ENCODE measurements at regions of chr16 and their contacts with region 1.

Region 1: DNA sequence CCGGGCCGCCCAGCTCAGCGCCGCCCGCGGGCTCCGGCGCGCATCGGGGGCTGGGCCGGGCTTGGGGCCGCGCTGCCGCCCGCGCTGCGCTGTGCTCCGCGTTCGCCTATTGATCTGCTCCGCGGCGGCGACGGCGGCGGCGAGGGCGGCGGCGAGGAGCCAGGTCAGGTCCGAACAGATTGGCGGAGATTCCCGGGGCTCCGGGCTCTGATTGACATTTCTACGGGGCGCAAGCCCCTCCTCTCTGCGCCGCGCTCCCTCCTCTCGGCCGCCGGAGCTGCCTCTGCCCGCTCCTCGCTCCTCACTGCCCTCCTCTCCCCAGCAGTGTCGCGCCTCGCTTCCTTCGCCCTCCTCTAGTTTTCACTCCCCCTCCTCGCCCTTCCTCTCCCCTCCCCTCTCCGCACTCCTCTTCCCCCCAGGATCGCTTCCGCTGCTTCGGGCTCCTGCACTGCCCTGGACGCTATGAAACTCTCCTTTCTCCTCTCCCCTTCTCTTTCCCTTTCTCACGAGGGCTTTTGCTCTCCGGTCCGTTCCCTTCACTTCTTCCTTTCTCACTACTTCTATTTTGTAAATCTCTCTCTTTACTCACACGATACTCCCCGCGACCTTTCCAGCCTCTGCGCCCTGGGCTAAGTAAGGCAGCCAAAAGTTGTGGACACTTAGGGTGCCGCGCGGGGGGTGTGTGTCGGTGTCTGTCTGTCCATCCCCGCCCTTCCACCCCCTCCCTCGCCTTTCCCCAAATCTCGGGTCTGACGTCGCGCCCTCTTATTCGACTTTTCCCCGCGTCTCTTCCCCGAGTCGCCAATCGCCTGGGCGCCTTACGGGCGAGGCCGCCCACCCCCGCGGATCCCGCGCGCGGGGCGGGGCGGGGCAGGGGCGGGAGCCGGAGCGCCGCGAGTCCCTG is at the start of gene IRX3:
- DNase-seq: no peak
- H3K4me3 Mint-ChIP-seq: peak within 1 kb of the TSS; percentile 75
- H3K27ac Mint-ChIP-seq: peak within 1 kb of the TSS; percentile 48
- H3K4me1 Mint-ChIP-seq: peaks cover 25% of the 10 kb centered on the region
- H3K27me3 Mint-ChIP-seq: peaks cover 67% of the 10 kb centered on the region
- total RNA-seq, gene IRX3: 0.74 and 0.96 TPM in 2 replicates

Region 2: DNA sequence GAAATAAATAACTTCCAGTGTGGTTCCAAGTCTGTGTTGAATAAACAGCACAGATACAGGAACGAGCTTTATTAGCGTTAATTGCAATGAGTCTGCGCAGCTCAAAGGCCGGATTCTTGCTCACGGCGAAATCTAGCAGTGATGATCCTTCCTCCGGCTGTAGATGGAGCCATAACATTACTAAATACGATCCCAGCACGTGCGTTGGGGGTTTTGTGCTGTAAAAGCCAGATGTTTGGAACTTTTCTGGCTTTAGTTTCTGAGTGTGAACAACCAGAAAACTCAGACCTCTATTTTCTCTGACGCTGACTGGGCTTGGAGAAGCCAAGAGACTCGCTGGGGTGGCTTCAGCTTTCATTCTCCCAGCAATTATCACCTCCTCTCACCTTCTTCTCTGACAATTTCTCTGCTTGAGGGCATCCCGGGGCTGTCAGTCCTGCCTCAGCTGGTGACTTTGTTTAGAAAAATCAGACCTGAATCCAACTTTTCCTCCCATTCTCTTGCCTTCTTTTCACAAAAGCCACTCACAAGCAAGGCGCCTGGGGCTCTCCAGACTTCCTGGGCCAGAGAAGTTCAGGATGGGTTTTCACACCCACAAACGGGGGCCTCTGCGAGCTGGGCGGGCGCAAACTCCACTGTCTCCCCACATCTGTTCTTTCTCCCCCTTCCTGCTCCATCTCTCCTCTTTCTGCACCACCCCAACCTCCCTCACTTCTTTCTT is 736.2 kb before region 1 on chr16:
- intact Hi-C with region 1: loop called (anchors 5 kb)
- DNase-seq: peak; percentile 17
- H3K4me3 Mint-ChIP-seq: no peak overlapping the region
- H3K27ac Mint-ChIP-seq: no peak overlapping the region
- H3K4me1 Mint-ChIP-seq: peaks cover 34% of the 10 kb centered on the region
- H3K27me3 Mint-ChIP-seq: peaks cover 26% of the 10 kb centered on the region

Region 3: DNA sequence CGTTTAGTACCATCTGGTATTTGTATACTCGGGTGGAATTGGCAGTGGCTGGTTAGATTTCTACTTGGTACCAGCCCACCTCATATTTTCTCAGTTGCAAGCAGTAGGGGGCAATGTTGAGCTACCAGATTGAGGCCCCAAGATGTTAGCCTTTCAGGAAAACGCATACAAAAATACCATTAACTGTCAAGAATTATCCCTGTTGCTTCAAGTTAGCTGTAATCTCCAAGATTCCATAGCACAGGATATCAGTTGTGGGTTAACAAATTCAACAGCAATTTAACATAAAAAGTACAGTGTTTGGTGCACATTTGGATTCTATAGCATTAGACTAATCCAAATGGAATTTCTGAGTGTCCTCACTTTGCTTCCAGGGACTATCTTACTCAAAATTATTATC is 394.2 kb before region 1 on chr16:
- intact Hi-C with region 1: loop called (anchors 5 kb)
- DNase-seq: peak; percentile 52
- H3K4me3 Mint-ChIP-seq: peak overlapping the region; percentile 5
- H3K27ac Mint-ChIP-seq: peak overlapping the region; percentile 60
- H3K4me1 Mint-ChIP-seq: peaks cover 42% of the 10 kb centered on the region
- H3K27me3 Mint-ChIP-seq: no peaks in the 10 kb centered on the region

Region 4: DNA sequence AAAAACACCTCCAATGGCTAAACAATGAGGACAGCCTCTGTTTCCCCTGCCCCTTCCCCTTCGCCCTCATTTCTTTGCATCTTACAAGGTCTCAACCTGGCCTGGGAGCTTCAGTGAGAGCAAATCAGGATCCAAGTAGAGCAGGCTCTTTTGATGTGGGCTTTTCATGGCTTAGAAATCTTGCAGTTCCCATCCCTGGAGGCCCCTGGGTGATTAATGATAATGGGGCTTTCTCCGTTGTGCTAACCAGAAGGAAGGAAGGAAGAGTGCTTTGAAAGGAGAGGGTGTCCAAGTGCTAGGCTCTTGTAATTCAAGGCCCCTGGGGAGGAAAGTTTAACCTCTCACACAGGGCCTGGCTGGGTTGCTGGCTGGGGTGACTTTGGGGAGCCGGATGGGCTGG is 18.7 kb after region 1 on chr16:
- intact Hi-C with region 1: no loop called
- DNase-seq: no peak
- H3K4me3 Mint-ChIP-seq: no peak overlapping the region
- H3K27ac Mint-ChIP-seq: no peak overlapping the region
- H3K4me1 Mint-ChIP-seq: no peaks in the 10 kb centered on the region
- H3K27me3 Mint-ChIP-seq: no peaks in the 10 kb centered on the region

Region 5: GRCh38 chr16:54936979-54937670 is 650.8 kb after region 1 on chr16:
- intact Hi-C with region 1: loop called (anchors 1 kb)
- DNase-seq: no peak
- H3K4me3 Mint-ChIP-seq: peak overlapping the region; percentile 21
- H3K27ac Mint-ChIP-seq: no peak overlapping the region
- H3K4me1 Mint-ChIP-seq: peaks cover 4% of the 10 kb centered on the region
- H3K27me3 Mint-ChIP-seq: peaks cover 81% of the 10 kb centered on the region

Region 6: GRCh38 chr16:55370762-55371482 is 1084.6 kb after region 1 on chr16:
- intact Hi-C with region 1: loop called (anchors 5 kb)
- DNase-seq: no peak
- H3K4me3 Mint-ChIP-seq: no peak overlapping the region
- H3K27ac Mint-ChIP-seq: no peak overlapping the region
- H3K4me1 Mint-ChIP-seq: no peaks in the 10 kb centered on the region
- H3K27me3 Mint-ChIP-seq: peaks cover 37% of the 10 kb centered on the region

Measured in activated T-helper 2 cell treated with anti-CD3 and anti-CD28 coated beads, Interferon-gamma antibody, Interleukin-2, Interleukin-4, amounts not matched to agents 10 μg/mL and 5 μg/mL and 100 μg/mL, durations not matched to agents 14 hours and 24 hours and 36 hours (primary cell).